Common myeloid progenitor, CD34-positive (primary cell): ENCODE measurements at regions of chr17 and their contacts with region 1.

Region 1: GRCh38 chr17:19004421-19005136 is at the start of gene FAM83G:
- DNase-seq: peak; percentile 81 to 89 (median 84)
- H3K4me3 ChIP-seq: peak within 1 kb of the TSS; percentile 16 to 83 (median 66)
- H3K27ac ChIP-seq: peak within 1 kb of the TSS in 1 of 2 experiments; percentile 16
- H3K4me1 ChIP-seq: peaks cover 0 to 42% (median 37%) of the 10 kb centered on the region in 4 experiments
- H3K27me3 ChIP-seq: no peaks in the 10 kb centered on the region

Region 2: GRCh38 chr17:18992454-18993130 is 12.0 kb before region 1 on chr17:
- CTCF ChIA-PET with region 1: interaction called, 7 read pairs
- POLR2A ChIA-PET with region 1: interaction called, 11 read pairs
- DNase-seq: peak; percentile 90 to 99 (median 98)
- H3K4me3 ChIP-seq: peak overlapping the region in 2 of 7 experiments; percentile 33 to 47
- H3K27ac ChIP-seq: no peak overlapping the region
- H3K4me1 ChIP-seq: peaks cover 2 to 41% (median 37%) of the 10 kb centered on the region in 4 experiments
- H3K27me3 ChIP-seq: no peaks in the 10 kb centered on the region